ENCODE measurements at regions of chr17 and their contacts with region 1.

Region 1: DNA sequence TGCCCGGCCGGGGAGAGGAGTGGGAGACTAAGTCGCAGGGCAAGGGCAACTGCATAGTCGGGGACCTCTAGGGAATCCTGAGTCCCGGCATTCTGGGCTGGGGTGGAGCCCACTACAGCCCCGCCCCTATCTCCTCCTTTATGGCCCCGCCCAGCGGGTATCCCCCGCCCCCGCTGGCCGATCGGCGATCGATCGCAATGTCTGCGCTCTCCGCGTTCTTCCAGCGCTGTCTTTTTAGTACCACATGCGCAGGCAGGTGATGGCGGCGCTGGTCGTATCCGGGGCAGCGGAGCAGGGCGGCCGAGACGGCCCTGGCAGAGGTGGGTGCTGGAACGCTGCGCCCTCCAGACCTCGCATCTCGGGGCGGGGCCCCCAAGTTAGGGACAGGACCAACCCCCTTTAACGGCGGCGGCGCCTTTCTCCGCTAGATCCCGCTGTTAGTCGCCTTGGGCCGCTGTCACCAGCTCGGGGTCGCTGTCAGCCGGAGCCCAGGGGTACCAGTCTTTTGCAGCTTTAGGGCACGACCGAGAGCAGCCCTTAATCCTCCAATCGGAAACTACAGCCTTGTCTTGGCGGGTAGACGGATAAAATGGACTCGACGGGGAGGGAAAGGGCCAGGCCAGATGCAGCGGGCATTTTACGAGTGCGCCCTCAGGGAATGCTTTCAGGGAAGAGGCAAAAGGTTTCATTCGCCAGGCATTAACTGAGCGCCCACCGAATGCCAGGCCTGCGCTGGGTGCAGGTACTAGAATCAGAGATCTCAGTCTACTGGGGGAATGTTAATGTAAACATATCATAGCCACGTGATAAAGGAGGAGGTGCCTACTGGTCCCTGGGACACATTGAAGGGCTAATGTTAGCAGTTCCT is at the start of gene DPH1:
- DNase-seq: peak; percentile 83 to 88 (median 83)
- H3K4me3 ChIP-seq: peak within 1 kb of the TSS; percentile 91 to 98
- H3K4me3 Mint-ChIP-seq: peak within 1 kb of the TSS; percentile 91 to 96 (median 94)
- H3K27ac ChIP-seq: peak within 1 kb of the TSS; percentile 81
- H3K27ac Mint-ChIP-seq: peak within 1 kb of the TSS; percentile 76 to 97 (median 94)
- H3K4me1 ChIP-seq: peaks cover 36% of the 10 kb centered on the region
- H3K4me1 Mint-ChIP-seq: peaks cover 14 to 44% (median 30%) of the 10 kb centered on the region in 4 donors
- H3K27me3 ChIP-seq: no peaks in the 10 kb centered on the region
- H3K27me3 Mint-ChIP-seq: peaks cover 5 to 12% of the 10 kb centered on the region in 2 donors
- total RNA-seq, gene DPH1: 76.6 to 95.8 TPM

Region 2: DNA sequence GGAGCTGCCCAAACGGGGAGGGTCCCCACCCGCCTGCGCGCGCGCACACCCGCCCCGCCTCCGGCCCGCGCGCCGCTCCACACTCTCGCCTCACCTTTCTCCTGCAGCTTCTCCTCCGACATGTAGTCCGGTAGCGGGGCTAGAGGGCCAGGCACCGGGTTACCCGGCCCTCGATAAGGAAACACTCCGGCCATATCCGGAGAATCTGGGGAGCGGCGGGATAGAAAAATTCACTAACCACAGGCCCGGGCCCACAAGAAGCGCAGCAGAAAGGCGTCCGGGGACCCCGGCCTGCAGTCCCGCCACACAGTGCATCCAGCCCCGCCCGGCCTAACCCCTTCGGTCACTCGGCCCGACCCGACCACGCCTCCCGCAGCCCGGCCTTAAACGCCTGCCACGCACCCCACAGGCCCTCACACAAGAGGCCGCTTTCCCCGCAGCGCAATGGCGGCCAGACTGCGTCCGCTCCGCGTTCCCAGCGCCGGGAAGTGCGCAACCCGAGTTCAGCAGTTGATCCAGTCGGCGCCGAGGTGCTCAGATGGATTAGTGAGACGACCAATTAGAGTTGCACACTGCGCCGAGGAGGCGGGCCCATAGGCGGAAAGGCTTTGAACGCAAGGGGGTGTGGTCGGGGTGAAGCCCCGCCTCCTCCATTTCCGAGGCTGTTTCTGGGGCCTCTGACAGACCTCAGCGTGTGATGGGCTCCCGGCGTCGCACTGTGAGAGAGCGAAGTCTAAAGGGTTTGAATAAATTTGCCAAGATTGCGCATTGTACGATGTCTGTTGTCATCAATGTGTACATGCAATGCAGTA is 345.6 kb before region 1 on chr17 and contains the start of gene PRPF8:
- CTCF ChIA-PET with region 1: no interaction called
- POLR2A ChIA-PET with region 1: no interaction called
- intact Hi-C with region 1: loop called (anchors 1 kb)
- DNase-seq: peak; percentile 98 to 99 (median 99)
- H3K4me3 ChIP-seq: peak within 1 kb of the TSS; percentile 83 to 96
- H3K4me3 Mint-ChIP-seq: peak within 1 kb of the TSS; percentile 97 to 99 (median 99)
- H3K27ac ChIP-seq: peak within 1 kb of the TSS; percentile 96
- H3K27ac Mint-ChIP-seq: peak within 1 kb of the TSS; percentile 93 to 100 (median 99)
- H3K4me1 ChIP-seq: peaks cover 29% of the 10 kb centered on the region
- H3K4me1 Mint-ChIP-seq: peaks cover 32 to 56% (median 41%) of the 10 kb centered on the region in 4 donors
- H3K27me3 ChIP-seq: no peaks in the 10 kb centered on the region
- H3K27me3 Mint-ChIP-seq: no peaks in the 10 kb centered on the region
- total RNA-seq, gene PRPF8: 429 to 464 TPM

Region 3: DNA sequence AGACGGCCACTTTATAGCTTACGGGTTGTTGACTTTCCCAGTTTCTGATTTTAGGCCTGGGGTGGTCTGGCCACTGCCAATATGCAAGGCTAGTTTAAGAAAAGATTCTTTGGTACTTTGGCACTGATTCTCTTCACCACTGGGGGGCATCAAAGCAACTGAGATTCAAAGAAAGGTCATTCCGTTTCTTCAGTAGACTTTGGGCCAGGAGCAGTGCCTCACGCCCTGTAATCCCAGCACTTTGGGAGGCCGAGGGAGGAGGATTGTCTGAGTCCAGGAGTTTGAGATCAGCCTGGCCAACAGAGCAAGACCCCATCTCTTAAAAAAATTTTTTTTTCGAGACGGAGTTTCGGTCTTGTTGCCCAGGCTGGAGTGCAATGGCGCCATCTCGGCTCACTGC is 147.3 kb before region 1 on chr17:
- CTCF ChIA-PET with region 1: interaction called, 10 read pairs
- POLR2A ChIA-PET with region 1: no interaction called
- intact Hi-C with region 1: no loop called
- DNase-seq: peak in 2 of 5 donors; percentile 26 to 28
- H3K4me3 ChIP-seq: no peak overlapping the region
- H3K4me3 Mint-ChIP-seq: no peak overlapping the region
- H3K27ac ChIP-seq: no peak overlapping the region
- H3K27ac Mint-ChIP-seq: no peak overlapping the region
- H3K4me1 ChIP-seq: no peaks in the 10 kb centered on the region
- H3K4me1 Mint-ChIP-seq: peaks cover 0 to 4% (median 2%) of the 10 kb centered on the region in 4 donors
- H3K27me3 ChIP-seq: no peaks in the 10 kb centered on the region
- H3K27me3 Mint-ChIP-seq: no peaks in the 10 kb centered on the region

Region 4: DNA sequence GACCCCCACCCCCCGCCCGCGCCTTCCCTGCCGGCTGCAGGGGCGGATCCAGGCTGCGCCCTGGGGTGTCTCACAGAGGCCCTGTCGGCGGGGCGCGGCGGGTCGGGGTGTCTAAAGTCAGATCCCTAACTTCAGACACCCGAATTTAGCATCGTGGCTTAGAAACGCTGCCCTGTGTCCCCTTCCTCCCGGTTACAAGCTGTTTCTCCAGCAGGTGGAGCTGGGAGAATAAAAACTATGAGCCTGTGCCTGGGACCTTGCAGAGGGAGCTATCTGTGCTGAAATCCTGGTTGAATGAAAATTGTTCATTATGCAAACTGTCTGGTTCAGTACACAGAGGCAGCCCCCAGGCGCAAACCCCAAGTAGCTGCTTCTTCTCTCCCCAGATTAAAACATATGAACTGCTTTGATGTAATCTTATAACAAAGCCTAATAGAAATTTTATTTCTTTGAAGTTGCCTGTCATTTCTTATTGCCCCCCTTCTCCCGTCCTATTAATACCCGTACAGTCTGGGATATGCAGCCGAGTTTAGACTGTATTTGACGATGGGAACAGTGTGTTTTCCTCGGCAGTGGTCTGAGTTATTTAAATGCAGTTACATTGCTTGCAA is 121.3 kb before region 1 on chr17:
- CTCF ChIA-PET with region 1: no interaction called
- POLR2A ChIA-PET with region 1: no interaction called
- intact Hi-C with region 1: loop called (anchors 10 kb)
- DNase-seq: peak in 4 of 5 donors; percentile 12 to 22 (median 18)
- H3K4me3 ChIP-seq: no peak overlapping the region
- H3K4me3 Mint-ChIP-seq: peak overlapping the region; percentile 26 to 65 (median 51)
- H3K27ac ChIP-seq: no peak overlapping the region
- H3K27ac Mint-ChIP-seq: no peak overlapping the region
- H3K4me1 ChIP-seq: peaks cover 14% of the 10 kb centered on the region
- H3K4me1 Mint-ChIP-seq: peaks cover 5 to 12% (median 8%) of the 10 kb centered on the region in 4 donors
- H3K27me3 ChIP-seq: peaks cover 20% of the 10 kb centered on the region
- H3K27me3 Mint-ChIP-seq: peaks cover 34 to 41% of the 10 kb centered on the region in 2 donors

Region 5: DNA sequence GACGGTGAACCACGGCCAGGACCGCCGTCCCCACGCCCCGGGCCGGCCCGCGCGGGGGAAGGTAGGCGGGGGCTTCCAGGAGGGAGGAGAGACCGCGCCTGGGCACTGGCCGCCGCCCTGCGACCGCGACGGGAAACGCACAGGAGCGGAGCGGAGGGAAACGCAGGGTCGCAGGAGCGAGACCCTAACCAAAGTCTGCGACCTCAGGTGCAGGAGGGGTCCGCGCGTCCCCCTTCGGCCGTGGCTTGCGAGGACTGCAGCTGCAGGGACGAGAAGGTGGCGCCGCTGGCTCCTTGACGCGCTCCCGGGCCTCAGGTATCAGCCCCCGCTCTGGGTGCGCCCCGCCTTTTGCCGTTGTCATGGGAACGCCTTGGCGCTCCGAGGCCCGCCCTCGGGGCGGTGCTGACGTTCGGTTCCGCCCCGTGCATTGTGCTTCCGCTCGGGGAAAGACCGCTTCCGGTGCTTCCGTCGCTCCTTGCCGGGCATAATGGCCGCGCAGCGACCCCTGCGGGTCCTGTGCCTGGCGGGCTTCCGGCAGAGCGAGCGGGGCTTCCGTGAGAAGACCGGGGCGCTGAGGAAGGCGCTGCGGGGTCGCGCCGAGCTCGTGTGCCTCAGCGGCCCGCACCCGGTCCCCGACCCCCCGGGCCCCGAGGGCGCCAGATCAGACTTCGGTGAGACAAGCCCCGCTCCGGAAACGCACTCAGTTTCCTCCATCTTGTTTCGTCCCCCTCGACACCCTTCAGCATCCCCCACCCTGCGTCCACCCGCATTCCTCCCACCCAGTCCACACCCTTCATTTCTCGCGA is 11.6 kb after region 1 on chr17 and contains the start of gene OVCA2:
- CTCF ChIA-PET with region 1: interaction called, 4 read pairs
- POLR2A ChIA-PET with region 1: interaction called, 11 read pairs
- intact Hi-C with region 1: loop called (anchors 1 kb)
- DNase-seq: peak; percentile 96 to 98 (median 97)
- H3K4me3 ChIP-seq: peak within 1 kb of the TSS; percentile 64 to 79
- H3K4me3 Mint-ChIP-seq: peak within 1 kb of the TSS; percentile 90 to 94 (median 92)
- H3K27ac ChIP-seq: peak within 1 kb of the TSS; percentile 85
- H3K27ac Mint-ChIP-seq: peak within 1 kb of the TSS; percentile 89 to 98 (median 96)
- H3K4me1 ChIP-seq: peaks cover 24% of the 10 kb centered on the region
- H3K4me1 Mint-ChIP-seq: peaks cover 6 to 32% (median 14%) of the 10 kb centered on the region in 4 donors
- H3K27me3 ChIP-seq: no peaks in the 10 kb centered on the region
- H3K27me3 Mint-ChIP-seq: no peaks in the 10 kb centered on the region
- total RNA-seq, gene OVCA2: 27.9 to 36.7 TPM

Region 6: DNA sequence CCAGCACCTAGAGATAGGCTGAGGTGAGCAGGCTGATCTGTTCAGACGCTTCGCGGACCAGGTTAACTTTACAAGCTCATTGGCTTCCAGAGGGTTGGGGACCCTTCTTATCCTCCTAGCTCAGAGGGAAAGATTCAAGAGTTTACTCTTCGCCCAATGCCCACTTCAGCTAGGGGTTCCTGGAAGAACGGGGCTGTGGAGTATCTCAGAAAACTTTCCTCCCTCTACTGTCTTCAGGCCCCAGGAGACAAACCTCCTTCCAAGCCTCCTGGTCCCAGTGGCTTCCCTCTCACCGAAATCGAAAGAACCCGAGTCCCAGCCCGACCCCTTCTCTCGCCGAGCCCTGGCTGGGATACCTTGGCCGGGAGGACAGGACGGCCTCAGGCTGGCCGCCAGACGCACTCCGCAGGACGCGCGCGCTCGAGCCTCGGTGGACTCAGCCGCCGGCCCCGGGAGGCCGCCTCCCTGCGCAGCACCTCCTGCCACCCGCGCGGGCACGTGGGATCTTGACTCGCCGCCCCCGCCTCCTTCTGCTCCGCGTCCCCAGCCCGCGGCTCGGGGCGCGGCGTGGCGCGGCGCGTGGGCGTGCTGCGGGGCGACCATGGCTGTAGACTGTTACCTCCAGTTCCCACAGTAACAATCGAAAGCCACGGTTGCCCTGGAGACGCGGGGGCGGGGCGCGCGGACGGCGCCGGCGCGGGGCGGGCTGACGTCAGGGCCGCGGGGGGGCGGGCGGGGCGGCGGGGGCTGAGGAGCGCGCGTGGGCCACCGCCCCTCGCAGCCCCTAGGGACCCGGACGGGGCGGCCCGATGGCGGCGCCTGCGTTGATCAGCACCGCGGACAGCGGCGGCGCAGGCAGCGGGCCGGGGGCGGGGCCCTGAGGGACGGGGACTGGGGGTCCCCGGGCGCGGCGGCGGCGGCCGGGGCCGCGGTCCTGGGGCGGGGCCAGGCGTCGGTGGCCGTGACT is 19.5 kb after region 1 on chr17:
- CTCF ChIA-PET with region 1: interaction called, 3 read pairs
- POLR2A ChIA-PET with region 1: interaction called, 4 read pairs
- intact Hi-C with region 1: loop called (anchors 1 kb)
- DNase-seq: peak; percentile 91 to 94 (median 92)
- H3K4me3 ChIP-seq: peak overlapping the region; percentile 19 to 58
- H3K4me3 Mint-ChIP-seq: peak overlapping the region; percentile 61 to 81 (median 72)
- H3K27ac ChIP-seq: peak overlapping the region; percentile 59
- H3K27ac Mint-ChIP-seq: peak overlapping the region; percentile 65 to 87 (median 81)
- H3K4me1 ChIP-seq: peaks cover 34% of the 10 kb centered on the region
- H3K4me1 Mint-ChIP-seq: peaks cover 11 to 37% (median 26%) of the 10 kb centered on the region in 4 donors
- H3K27me3 ChIP-seq: no peaks in the 10 kb centered on the region
- H3K27me3 Mint-ChIP-seq: no peaks in the 10 kb centered on the region

Region 7: DNA sequence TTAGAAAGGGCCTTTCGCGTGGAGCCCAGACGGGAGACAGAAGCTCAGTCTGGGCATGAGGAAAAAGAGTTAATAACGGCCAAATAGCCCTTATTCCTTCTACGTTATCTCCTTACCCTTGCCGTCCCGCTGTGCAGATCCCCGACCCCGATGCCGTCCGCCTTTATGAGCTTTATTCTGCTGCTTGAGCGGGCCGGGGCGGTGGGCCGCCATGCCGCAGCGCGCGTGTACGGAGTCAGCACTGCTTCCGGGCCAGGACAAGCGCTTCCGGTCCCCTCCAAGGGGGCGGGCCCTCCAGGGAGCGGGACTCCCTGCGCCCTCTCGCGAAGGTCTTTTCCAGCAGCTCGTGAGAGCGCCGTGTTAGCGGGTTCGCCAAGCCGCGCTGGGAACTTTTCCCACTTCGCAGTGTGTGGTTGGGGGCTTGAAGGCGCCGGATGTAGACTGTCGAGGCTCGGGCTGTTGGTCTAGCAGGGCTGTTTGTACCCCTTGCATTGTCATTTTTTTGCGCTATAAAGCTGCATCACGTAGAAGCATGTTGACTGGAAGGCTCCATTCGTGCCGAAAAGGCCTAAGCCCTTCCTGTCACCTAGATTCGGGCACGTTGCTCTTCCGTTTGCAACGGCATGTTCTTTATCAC is 306.2 kb after region 1 on chr17 and contains the start of gene TSR1:
- CTCF ChIA-PET with region 1: no interaction called
- POLR2A ChIA-PET with region 1: interaction called, 3 read pairs
- intact Hi-C with region 1: loop called (anchors 1 kb)
- DNase-seq: peak; percentile 86 to 88 (median 87)
- H3K4me3 ChIP-seq: peak within 1 kb of the TSS; percentile 94 to 97
- H3K4me3 Mint-ChIP-seq: peak within 1 kb of the TSS; percentile 97 to 100 (median 99)
- H3K27ac ChIP-seq: peak within 1 kb of the TSS; percentile 70
- H3K27ac Mint-ChIP-seq: peak within 1 kb of the TSS; percentile 93 to 98 (median 96)
- H3K4me1 ChIP-seq: peaks cover 20% of the 10 kb centered on the region
- H3K4me1 Mint-ChIP-seq: peaks cover 18 to 34% (median 26%) of the 10 kb centered on the region in 4 donors
- H3K27me3 ChIP-seq: no peaks in the 10 kb centered on the region
- H3K27me3 Mint-ChIP-seq: no peaks in the 10 kb centered on the region
- total RNA-seq, gene TSR1: 22.6 to 31.7 TPM